Pancreas (tissue), 10 donors: ENCODE measurements at regions of chr5 and their contacts with region 1.

Region 1: DNA sequence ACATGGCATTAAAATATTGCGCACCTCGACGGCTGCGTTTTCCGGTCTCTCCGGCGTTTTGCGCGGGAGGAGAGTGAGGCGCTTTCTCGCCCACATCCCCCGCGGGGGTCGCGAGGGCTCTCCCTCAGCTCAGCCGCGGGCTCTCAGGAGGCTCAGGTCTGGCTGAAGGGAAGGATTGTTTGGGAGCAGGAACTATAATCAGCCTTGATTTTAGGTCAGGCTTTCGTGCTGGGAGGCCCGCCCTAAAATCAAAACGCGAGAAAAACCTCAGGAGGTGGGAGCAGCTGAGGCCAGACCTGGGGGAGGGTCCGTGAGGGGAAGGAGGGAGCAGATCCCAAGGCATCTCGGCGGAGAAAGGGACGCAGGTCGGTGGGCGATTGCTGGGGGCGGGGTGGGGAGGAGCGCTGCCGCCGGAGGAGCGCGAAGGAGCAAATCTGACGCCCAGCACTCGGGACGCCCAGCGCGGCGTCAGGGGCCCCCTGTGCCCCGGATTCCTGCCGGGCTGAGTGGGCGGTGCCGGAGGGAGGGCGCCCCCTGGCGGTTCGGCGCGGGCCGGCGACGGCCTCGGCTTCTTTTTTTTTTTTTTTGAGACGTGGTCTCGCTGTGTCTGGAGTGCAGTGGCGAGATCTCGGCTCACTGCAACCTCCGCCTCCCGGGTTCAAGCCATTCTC is 18.7 kb upstream of the RNF130 start:
- DNase-seq: peak; percentile 55 to 93 (median 74)
- ATAC-seq: peak; percentile 77 to 96 (median 90)
- H3K4me3 ChIP-seq: peak overlapping the region; percentile 13 to 50 (median 18)
- H3K27ac ChIP-seq: peak overlapping the region; percentile 18 to 71 (median 38)
- H3K4me1 ChIP-seq: peaks cover 3 to 12% (median 11%) of the 10 kb centered on the region in 3 donors
- H3K27me3 ChIP-seq: no peaks in the 10 kb centered on the region
- CTCF ChIP-seq: peak; percentile 88 to 93 (median 92)

Region 2: DNA sequence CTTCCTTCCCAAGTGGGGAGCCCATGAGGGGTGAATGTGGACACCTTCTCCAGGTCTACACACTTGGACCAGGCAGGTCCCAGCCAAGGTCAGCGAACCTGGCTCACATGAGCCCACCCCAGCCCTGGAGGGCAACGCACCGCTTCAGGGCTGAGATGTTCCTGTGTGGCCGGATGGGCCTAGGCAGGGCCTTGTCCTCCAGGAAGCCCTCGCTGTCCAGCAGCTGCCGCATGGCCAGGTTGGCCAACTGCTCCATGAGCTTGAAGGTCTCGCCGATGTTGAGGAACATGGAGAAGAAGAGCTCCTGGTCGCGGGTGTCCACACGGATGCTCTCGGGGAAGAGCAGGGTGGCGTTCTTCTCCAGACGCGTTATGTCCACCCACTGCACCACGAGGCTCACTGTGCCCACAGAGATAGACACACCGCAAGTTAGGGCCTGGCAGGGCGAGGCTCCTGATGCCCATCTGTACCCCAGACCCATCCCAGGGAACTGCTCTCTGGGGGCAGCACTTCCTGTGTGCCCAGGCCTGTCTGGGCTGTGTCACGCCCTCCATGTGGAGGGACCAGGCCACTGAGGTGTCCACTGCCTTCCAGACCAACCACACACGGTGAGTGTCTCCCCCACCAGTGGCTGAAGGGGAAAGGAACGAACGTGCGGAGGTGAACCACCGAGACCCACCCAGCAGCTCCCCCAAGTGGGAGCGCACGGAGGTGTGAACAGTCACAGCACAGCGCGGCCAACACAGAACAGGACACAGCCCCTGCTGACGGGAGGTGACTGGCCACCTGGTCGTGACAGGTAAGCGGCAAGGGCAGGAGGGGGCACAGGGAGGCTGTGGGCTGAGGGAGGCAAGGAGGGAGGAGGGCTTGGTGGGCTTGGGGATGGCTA is 196.9 kb before region 1 on chr5:
- intact Hi-C with region 1: no loop called
- DNase-seq: peak in 1 of 6 donors; percentile 67
- ATAC-seq: no peak
- H3K4me3 ChIP-seq: no peak overlapping the region
- H3K27ac ChIP-seq: no peak overlapping the region
- H3K4me1 ChIP-seq: no peaks in the 10 kb centered on the region
- H3K27me3 ChIP-seq: no peaks in the 10 kb centered on the region
- CTCF ChIP-seq: no peak

Region 3: DNA sequence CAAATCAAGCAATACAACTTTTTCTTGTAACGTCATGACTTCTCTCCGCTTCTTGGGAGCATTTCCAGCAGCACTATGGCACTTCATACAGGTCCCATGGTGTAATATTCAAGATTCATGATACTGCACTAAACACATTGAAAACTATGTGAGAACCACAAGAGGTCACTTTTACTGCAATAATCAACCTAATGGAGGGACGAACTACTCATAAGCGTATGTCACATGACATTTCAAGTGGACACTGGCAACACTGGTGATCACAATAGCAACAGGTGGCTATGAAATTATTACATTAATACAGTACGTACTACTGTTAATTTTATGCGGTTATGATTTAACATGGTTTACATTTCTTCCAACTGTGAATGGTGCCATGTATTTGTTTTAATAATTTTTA is 103.9 kb before region 1 on chr5:
- intact Hi-C with region 1: loop called in 1 of 3 experiments (anchors 10 kb)
- DNase-seq: peak in 1 of 6 donors; percentile 26
- ATAC-seq: peak; percentile 96 to 100 (median 98)
- H3K4me3 ChIP-seq: no peak overlapping the region
- H3K27ac ChIP-seq: no peak overlapping the region
- H3K4me1 ChIP-seq: peaks cover 0 to 6% (median 4%) of the 10 kb centered on the region in 3 donors
- H3K27me3 ChIP-seq: no peaks in the 10 kb centered on the region
- CTCF ChIP-seq: peak in 2 of 4 donors; percentile 11 to 13